Mammary epithelial cell (primary cell): ENCODE measurements at regions of chr11 and their contacts with region 1.

Region 1: DNA sequence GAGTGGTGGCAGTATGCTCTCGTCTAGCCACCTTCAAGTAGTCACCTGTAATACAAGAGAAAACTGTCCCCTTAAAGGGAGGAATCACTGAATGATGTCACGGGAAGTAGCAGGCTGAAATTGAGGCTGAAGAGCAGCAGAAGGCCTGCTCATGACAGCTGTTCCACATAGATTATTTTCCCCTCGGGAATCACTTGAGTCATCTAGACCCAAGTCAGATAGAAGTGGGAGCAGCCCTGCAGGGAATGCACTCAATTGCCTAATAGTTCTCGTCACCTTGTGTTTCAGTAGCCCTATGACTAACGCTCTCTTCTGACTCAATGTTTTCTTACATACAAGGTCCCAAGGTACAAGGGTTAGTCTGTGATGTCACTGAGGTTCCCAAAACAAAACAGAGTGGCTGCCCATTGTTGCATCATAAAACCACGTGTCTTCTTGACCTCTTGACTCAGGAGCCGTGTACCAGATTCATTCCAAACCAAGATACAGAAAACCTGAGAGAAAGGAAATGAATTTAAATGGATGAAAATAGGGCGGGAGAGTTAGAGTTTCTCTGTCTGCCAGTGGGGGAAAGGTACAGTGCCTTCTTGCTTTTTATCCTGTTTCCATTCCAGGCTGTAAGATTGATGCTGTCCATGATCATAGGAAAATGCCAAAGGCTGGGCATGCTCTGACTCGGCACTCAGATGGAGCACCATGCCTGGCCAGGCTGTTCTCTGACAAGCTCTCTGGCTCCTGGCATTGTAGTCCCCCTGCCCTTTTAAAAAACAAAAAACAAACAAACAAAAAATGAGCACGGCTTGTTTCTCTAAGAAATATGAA is 21.6 kb upstream of the C11orf96 start:
- DNase-seq: peak; percentile 100
- H3K4me3 ChIP-seq: no peak overlapping the region
- H3K27ac ChIP-seq: peak overlapping the region; percentile 70
- H3K4me1 ChIP-seq: peaks cover 21% of the 10 kb centered on the region
- H3K27me3 ChIP-seq: no peaks in the 10 kb centered on the region
- CTCF ChIP-seq: no peak

Region 2: GRCh38 chr11:43632171-43632570 is 288.6 kb before region 1 on chr11:
- CTCF ChIA-PET with region 1: no interaction called
- dilution Hi-C with region 1: no loop called
- in situ Hi-C with region 1: no loop called
- intact Hi-C with region 1: no loop called
- DNase-seq: peak; percentile 12
- H3K4me3 ChIP-seq: no peak overlapping the region
- H3K27ac ChIP-seq: no peak overlapping the region
- H3K4me1 ChIP-seq: no peaks in the 10 kb centered on the region
- H3K27me3 ChIP-seq: peaks cover 8% of the 10 kb centered on the region
- CTCF ChIP-seq: no peak

Region 3: GRCh38 chr11:43937434-43938411 is 16.9 kb after region 1 on chr11:
- CTCF ChIA-PET with region 1: no interaction called
- dilution Hi-C with region 1: no loop called
- in situ Hi-C with region 1: no loop called
- intact Hi-C with region 1: loop called (anchors 2 kb)
- DNase-seq: peak; percentile 69
- H3K4me3 ChIP-seq: no peak overlapping the region
- H3K27ac ChIP-seq: peak overlapping the region; percentile 6
- H3K4me1 ChIP-seq: peaks cover 13% of the 10 kb centered on the region
- H3K27me3 ChIP-seq: peaks cover 18% of the 10 kb centered on the region
- CTCF ChIP-seq: peak in 1 of 2 donors; percentile 2

Region 4: DNA sequence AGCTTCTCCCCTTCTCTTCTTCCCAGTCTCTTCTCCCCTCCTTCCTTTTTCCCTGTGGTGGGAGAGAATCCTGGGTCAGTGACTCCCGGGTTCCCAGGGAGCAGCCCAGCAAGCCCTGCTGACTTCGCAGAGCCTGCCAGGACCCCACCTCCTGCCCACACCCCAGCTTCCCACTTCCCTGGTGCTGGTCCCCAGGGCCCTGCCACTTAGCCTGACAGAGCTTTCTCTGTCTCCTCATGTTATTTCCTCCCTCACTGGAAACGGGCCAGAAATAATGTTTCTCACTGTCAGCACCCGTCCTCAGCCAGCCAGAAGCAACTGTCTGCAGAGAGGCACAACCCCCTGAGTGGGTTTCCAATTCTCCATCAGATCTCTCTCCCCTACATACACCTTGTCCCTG is 48.7 kb after region 1 on chr11:
- CTCF ChIA-PET with region 1: no interaction called
- dilution Hi-C with region 1: no loop called
- in situ Hi-C with region 1: no loop called
- intact Hi-C with region 1: no loop called
- DNase-seq: no peak
- H3K4me3 ChIP-seq: no peak overlapping the region
- H3K27ac ChIP-seq: no peak overlapping the region
- H3K4me1 ChIP-seq: no peaks in the 10 kb centered on the region
- H3K27me3 ChIP-seq: peaks cover 3% of the 10 kb centered on the region
- CTCF ChIP-seq: no peak